ENCODE measurements at regions of chr14 and their contacts with region 1.

Region 1: GRCh38 chr14:68312884-68313610 is 479.8 kb downstream of the ZFP36L1 start:
- DNase-seq: no peak
- H3K4me3 Mint-ChIP-seq: no peak overlapping the region
- H3K27ac Mint-ChIP-seq: no peak overlapping the region
- H3K4me1 Mint-ChIP-seq: peaks cover 22% of the 10 kb centered on the region
- H3K27me3 Mint-ChIP-seq: no peaks in the 10 kb centered on the region

Region 2: GRCh38 chr14:68268197-68268596 is 44.9 kb before region 1 on chr14:
- intact Hi-C with region 1: loop called (anchors 10 kb)
- DNase-seq: no peak
- H3K4me3 Mint-ChIP-seq: no peak overlapping the region
- H3K27ac Mint-ChIP-seq: peak overlapping the region; percentile 42
- H3K4me1 Mint-ChIP-seq: peaks cover 28% of the 10 kb centered on the region
- H3K27me3 Mint-ChIP-seq: no peaks in the 10 kb centered on the region

Measured in activated T-helper 1 cell treated with anti-CD3 and anti-CD28 coated beads, Interleukin-12 subunit alpha, Interleukin-12 subunit beta, Interleukin-2, Interleukin-4 antibody, amounts not matched to agents 30 ng/mL and 10 ng/mL and 1 ng/mL, durations not matched to agents 14 hours and 24 hours and 36 hours (primary cell).